ENCODE measurements at regions of chr7 and their contacts with region 1.

Region 1: GRCh38 chr7:95865716-95866371 is 93.5 kb downstream of the DYNC1I1 start:
- DNase-seq: no peak
- H3K4me3 ChIP-seq: no peak overlapping the region
- CTCF ChIP-seq: no peak
- POLR2A ChIP-seq: no peak

Region 2: DNA sequence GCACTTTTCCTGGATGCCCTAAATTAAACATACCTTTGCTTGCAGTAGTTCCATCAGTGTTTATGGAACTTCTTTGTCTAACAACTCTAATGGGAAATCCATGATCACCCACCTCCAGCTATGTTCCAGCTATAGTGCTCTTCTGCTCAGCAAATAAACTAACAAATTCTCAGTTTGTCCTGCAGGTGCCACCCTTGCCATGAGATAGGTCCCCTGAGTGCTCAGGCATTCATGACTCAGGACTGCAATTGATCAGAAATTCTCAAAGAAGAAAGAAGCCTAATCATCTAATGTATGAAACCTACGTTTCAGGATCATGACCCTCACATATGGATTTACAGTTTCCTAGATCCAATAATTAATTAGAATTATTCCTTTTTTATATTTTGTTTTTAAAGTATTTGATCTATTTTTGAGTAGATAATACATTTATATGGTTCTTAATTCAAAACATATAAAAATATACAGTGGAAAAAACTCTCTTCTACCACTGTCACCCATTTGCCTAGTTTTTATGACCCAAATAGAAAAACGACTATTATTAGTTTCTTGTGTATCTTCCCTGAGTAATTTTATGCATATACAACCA is 142.2 kb before region 1 on chr7:
- intact Hi-C with region 1: loop called (anchors 10 kb)
- DNase-seq: no peak
- H3K4me3 ChIP-seq: no peak overlapping the region
- CTCF ChIP-seq: no peak
- POLR2A ChIP-seq: no peak

Measured in lower leg skin (tissue), 4 donors.